Activated T-helper 1 cell treated with anti-CD3 and anti-CD28 coated beads, Interleukin-12 subunit alpha, Interleukin-12 subunit beta, Interleukin-2, Interleukin-4 antibody, amounts not matched to agents 30 ng/mL and 10 ng/mL and 1 ng/mL, durations not matched to agents 14 hours and 24 hours and 36 hours (primary cell): ENCODE measurements at regions of chr15 and their contacts with region 1.

Region 1: DNA sequence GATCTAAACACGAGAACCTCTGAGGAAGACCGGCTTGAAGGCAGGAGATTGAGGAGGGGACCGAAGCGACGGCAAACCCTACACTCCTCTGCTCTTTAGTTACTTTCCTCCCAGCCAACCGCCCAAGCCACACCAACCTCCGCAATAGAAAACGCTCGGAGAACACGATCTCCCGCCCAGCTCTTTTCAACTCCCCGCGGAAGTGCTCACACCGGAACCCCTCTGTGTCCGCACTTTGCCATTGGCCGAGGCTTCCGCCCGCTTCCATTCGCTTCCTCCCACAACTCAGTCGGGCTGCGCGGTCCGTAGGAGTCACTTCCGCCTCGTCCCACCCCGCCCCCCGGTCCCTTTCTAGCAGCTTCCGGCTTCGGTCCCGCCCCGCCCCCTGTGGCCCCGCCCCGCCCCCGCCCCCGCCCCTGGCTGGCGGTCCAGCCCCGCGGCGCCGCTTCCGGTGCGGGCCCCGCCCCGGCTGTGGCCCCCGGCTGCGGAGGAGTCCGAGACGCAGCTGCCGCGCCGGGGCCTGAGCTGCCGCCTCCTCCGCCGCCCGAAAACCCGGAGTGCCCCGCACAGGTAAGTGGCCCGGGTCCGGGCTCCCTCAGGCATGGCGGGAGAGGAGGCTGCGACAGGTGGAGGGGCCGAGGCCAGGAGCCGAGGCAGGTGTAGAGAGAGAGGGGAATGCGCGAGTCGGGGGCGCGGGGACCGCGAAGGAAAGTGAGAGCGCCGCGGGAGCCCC is at the start of gene ARID3B:
- DNase-seq: peak; percentile 91
- H3K4me3 Mint-ChIP-seq: peak within 1 kb of the TSS; percentile 94
- H3K27ac Mint-ChIP-seq: peak within 1 kb of the TSS; percentile 96
- H3K4me1 Mint-ChIP-seq: peaks cover 56% of the 10 kb centered on the region
- H3K27me3 Mint-ChIP-seq: no peaks in the 10 kb centered on the region
- total RNA-seq, gene ARID3B: 48.8 and 53.6 TPM in 2 replicates

Region 2: DNA sequence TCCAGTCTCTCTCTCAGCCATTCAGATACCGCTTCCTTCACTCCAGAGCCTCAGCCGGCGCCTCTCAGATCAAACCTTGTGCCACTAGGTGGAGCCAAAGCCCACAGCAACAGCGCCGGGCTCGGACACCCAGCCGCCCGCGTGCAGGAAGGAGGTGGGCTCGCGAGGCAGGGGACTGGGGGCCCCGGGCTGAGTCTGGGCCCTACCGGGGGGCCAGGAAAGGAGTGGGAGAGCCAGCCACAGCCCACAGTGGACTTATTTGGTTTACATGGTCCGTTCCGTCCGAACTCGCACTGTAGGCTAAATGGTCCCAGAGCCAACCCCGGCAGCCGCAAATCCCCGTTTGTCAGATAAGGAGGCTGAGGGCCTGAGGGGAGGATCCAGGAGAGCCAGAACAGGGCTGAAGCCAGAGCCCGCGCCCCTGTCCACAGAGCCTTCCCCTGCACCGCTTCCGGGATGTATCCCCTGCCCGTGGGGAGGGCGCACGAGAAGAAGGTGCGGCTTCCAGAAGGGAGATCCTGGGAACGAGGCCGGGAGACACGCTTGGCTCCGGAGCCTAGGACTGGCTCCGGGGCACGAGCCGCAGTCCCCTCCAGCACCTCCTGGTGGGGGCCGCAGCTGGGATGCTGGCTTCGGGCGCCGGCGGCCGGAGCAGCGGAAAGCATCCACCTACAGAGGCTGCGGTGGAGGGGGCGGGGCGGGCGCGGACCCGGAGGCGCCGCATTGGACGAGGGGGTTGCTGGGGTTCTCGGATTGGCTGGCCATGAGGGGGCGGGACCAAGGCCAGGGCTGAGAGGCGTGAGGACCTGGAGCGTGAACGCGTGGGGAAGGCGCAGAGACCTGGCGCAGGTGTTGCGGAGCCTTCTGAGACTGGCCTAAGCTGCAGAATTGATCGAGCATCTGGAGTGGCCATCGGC is 166.9 kb before region 1 on chr15:
- intact Hi-C with region 1: loop called (anchors 1 kb)
- DNase-seq: peak; percentile 90
- H3K4me3 Mint-ChIP-seq: peak overlapping the region; percentile 85
- H3K27ac Mint-ChIP-seq: peak overlapping the region; percentile 78
- H3K4me1 Mint-ChIP-seq: peaks cover 50% of the 10 kb centered on the region
- H3K27me3 Mint-ChIP-seq: peaks cover 26% of the 10 kb centered on the region

Region 3: DNA sequence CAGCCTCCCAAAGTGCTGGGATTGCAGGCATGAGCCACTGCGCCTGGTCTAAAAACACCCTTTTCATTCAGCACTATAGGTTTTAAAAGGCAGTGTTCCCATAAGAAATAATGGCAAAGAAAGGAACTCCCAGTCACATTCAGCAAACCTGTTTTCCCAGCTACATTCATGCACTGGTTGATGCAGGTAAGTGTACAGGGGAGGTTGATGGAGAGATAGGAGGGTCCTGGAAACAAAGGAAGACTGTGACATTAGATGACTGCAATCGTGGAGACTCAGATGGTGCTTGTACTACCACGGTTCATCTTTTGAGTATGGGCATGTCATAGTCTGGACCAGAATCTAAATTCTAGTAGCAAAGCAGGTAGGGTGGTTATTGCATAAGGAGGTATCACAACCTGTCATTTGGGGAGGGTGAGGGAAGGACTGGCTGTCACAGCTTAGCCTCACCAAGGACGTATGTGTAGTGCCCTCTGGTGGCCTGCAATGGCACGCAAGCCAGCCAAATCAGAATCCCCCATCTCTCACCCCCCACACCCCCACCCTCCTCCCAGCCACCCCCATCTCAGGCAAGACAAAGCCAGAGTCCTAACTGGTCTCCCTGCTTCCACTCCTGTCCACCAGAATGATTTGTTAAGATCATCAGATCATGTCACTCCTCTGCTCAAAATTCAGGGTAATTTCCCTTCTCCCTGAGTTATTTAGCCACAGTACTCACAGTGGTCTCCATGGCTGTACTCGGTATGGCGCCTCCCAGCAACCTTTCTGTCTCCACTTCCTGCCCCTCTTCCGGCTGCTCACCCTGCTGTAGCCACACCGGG is 51.2 kb before region 1 on chr15:
- intact Hi-C with region 1: loop called (anchors 1 kb)
- DNase-seq: peak; percentile 63
- H3K4me3 Mint-ChIP-seq: no peak overlapping the region
- H3K27ac Mint-ChIP-seq: peak overlapping the region; percentile 64
- H3K4me1 Mint-ChIP-seq: peaks cover 13% of the 10 kb centered on the region
- H3K27me3 Mint-ChIP-seq: no peaks in the 10 kb centered on the region

Region 4: DNA sequence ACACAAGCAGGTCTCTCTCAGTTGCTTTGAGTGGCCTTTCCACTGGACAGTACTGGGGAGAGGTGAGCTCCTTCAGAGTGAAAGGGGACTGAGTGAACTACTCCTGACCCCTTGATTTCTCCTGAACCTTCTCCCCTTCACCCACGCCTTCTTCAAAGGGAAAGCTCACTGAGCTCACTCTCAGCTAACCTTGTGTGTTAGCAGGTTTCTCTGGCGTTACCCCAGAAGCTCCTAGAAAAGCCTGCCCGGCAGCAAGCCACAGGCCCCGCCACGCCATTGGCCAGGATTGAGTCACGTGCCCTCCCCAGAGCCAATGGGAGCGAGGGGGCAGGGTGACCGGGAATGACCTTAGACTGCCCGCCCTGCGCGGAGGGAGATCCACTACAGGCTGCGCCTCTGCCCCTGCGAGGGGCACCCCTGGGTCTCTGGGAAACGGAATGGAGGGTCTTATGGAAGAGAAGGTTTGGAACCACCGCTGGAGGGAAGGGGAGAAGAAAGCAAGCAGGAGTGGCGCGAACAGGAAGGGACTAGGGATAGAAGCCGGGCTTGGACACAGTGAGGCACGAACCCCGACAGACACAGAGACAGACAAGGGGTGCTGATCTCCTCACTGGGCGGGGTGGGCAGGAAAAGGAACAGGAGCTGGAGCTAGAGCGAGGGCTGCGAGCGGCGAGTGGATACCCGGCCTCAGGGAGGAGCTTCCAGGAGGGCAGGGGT is 57.4 kb after region 1 on chr15:
- intact Hi-C with region 1: loop called (anchors 1 kb)
- DNase-seq: peak; percentile 87
- H3K4me3 Mint-ChIP-seq: peak overlapping the region; percentile 100
- H3K27ac Mint-ChIP-seq: peak overlapping the region; percentile 100
- H3K4me1 Mint-ChIP-seq: peaks cover 19% of the 10 kb centered on the region
- H3K27me3 Mint-ChIP-seq: no peaks in the 10 kb centered on the region

Region 5: GRCh38 chr15:74642729-74643367 is 101.9 kb after region 1 on chr15:
- intact Hi-C with region 1: no loop called
- DNase-seq: no peak
- H3K4me3 Mint-ChIP-seq: no peak overlapping the region
- H3K27ac Mint-ChIP-seq: no peak overlapping the region
- H3K4me1 Mint-ChIP-seq: peaks cover 9% of the 10 kb centered on the region
- H3K27me3 Mint-ChIP-seq: no peaks in the 10 kb centered on the region

Region 6: GRCh38 chr15:74781431-74782258 is 240.7 kb after region 1 on chr15 and contains the start of gene CSK:
- intact Hi-C with region 1: loop called (anchors 2 kb)
- DNase-seq: peak; percentile 78
- H3K4me3 Mint-ChIP-seq: peak within 1 kb of the TSS; percentile 96
- H3K27ac Mint-ChIP-seq: peak within 1 kb of the TSS; percentile 100
- H3K4me1 Mint-ChIP-seq: peaks cover 62% of the 10 kb centered on the region
- H3K27me3 Mint-ChIP-seq: no peaks in the 10 kb centered on the region
- total RNA-seq, gene CSK: 348 and 362 TPM in 2 replicates

Region 7: DNA sequence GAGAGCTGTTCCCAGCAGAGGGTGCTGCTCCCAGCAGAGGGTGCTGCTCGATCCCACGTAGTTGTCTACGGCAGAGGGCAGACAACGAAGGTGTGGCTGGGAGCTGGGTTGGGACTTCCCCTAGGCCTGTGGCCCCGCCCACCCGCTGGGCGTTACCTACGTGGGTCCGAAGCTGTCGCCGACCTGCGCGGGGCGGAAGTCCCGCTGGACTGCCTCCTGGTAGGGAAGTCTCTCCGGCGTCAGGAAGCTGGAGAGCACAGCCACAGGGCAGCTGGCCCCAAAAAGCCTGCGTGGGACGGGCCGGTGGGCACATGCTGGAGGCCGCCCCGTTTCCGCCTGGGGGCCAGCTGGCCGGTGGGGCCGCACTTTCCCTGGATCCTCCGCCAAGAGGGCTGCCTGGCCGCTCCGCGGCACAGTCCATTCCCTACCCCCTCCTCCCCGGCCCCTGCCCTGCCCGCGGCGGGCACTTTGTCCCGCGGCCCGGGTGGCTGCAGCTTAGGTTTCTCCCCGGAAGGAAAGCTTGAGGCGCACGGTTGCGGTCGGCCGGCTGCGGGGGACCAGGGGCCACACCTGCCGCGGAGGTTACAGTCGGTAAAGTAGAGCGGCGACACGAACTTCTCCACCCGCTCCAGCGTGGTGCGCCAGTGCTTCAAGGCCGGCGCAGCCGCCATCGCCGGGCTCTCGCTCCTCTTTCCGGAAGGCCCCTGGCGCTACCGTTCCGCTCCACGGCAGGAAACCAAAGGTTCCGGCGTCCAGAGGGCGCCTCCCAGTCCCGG is 827.2 kb after region 1 on chr15 and contains the start of gene MAN2C1:
- intact Hi-C with region 1: loop called (anchors 5 kb)
- DNase-seq: peak; percentile 91
- H3K4me3 Mint-ChIP-seq: peak within 1 kb of the TSS; percentile 94
- H3K27ac Mint-ChIP-seq: peak within 1 kb of the TSS; percentile 92
- H3K4me1 Mint-ChIP-seq: peaks cover 16% of the 10 kb centered on the region
- H3K27me3 Mint-ChIP-seq: no peaks in the 10 kb centered on the region
- total RNA-seq, gene MAN2C1: 250 and 254 TPM in 2 replicates